B cell (primary cell): ENCODE measurements at regions of chr3 and their contacts with region 1.

Region 1: DNA sequence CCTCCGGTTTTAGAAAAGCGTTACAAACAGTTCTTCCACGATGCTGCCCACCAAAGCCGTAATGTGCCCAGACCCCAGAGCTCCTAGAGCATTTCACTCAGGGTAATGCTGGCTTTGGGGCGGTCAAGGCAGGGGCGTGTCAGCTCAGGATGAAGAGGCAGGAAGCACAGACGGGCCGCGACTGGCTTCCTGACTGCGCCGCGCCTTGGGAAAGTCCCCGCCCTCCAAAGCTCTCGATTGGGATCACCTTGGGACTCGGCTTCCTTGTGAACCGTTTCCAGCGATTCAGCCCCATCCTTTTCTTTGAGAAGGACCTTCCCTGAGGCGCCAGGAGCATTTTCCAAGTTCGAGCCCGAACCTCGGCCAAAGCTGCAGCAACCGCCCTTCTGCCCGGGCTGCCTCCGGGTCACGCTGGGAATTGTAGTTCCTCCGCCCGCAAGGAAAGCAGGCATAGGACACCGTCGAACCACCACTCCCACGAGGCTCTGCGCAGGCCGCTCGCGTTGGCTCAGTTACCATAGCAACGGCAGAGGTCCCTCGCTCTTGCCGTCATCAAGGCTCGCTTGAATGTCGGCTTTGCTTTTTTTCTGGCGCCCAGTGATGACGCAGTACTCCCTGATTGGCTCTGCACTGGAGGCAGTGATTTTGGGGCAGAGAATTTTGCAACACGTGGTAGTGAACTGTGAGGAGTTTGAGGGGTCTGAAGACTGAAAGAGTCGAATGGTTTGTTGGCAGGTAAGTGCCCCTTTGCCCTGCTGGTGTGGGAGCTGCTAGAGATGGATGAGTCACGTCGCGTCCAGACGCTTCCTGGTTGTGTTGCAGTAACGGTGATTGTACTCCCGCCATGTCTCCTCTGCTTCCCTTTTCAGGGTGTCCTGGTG is at the starts of genes CCDC191 and QTRT2:
- DNase-seq: peak; percentile 99
- ATAC-seq: peak; percentile 95
- H3K4me3 ChIP-seq: peak within 1 kb of the TSS; percentile 71 to 100 (median 74)
- H3K4me3 Mint-ChIP-seq: peak within 1 kb of the TSS; percentile 95
- H3K27ac ChIP-seq: peak within 1 kb of the TSS; percentile 82 to 93
- H3K27ac Mint-ChIP-seq: peak within 1 kb of the TSS; percentile 96
- H3K4me1 ChIP-seq: peaks cover 36 to 46% of the 10 kb centered on the region in 2 donors
- H3K4me1 Mint-ChIP-seq: peaks cover 59% of the 10 kb centered on the region
- H3K27me3 ChIP-seq: no peaks in the 10 kb centered on the region
- H3K27me3 Mint-ChIP-seq: no peaks in the 10 kb centered on the region
- CTCF ChIP-seq: no peak
- total RNA-seq, gene CCDC191: 47.9 and 52.5 TPM in 2 replicates
- total RNA-seq, gene QTRT2: 59.5 and 61.8 TPM in 2 replicates

Region 2: GRCh38 chr3:113514265-113514769 is 542.1 kb before region 1 on chr3:
- CTCF ChIA-PET with region 1: no interaction called
- POLR2A ChIA-PET with region 1: no interaction called
- intact Hi-C with region 1: loop called (anchors 2 kb)
- DNase-seq: no peak
- ATAC-seq: no peak
- H3K4me3 ChIP-seq: peak overlapping the region; percentile 46 to 98 (median 92)
- H3K4me3 Mint-ChIP-seq: no peak overlapping the region
- H3K27ac ChIP-seq: peak overlapping the region; percentile 77 to 91
- H3K27ac Mint-ChIP-seq: no peak overlapping the region
- H3K4me1 ChIP-seq: peaks cover 12 to 17% of the 10 kb centered on the region in 2 donors
- H3K4me1 Mint-ChIP-seq: peaks cover 14% of the 10 kb centered on the region
- H3K27me3 ChIP-seq: peaks cover 0 to 14% (median 4%) of the 10 kb centered on the region in 4 experiments
- H3K27me3 Mint-ChIP-seq: peaks cover 23% of the 10 kb centered on the region
- CTCF ChIP-seq: no peak

Region 3: DNA sequence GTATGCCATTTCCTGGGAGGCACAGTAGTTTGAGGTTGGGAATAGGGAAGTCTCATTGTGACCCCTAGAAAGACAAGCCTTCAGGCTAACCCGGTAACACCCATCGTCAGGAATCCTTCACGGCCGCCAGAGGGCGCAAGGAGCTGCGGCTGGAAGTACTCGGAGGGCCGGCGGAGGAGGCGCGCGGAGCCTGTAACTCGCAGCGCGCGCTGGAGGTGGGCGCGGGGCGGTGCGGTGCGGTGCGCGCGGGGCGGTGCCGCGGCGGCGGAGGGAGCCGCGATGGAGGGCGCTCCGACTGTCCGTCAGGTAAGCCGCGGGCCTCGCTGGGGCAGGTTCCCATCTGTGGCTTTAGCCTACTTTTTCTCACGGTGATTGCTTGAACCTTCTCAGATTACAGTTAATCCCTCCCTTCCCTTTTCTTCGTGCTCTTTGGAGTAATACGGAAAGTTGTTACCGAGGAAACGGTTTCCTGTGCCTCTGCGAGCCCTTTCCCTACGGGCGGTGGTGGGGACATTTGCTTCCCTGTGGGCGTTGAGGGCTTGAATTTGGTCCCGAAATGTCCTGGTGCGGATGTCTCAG is 217.7 kb before region 1 on chr3 and contains the start of gene GRAMD1C:
- CTCF ChIA-PET with region 1: no interaction called
- POLR2A ChIA-PET with region 1: no interaction called
- intact Hi-C with region 1: loop called (anchors 1 kb)
- DNase-seq: peak; percentile 92
- ATAC-seq: peak; percentile 99
- H3K4me3 ChIP-seq: peak within 1 kb of the TSS; percentile 59 to 84 (median 70)
- H3K4me3 Mint-ChIP-seq: peak within 1 kb of the TSS; percentile 91
- H3K27ac ChIP-seq: peak within 1 kb of the TSS; percentile 8 to 62
- H3K27ac Mint-ChIP-seq: peak within 1 kb of the TSS; percentile 71
- H3K4me1 ChIP-seq: peaks cover 7 to 13% of the 10 kb centered on the region in 2 donors
- H3K4me1 Mint-ChIP-seq: peaks cover 29% of the 10 kb centered on the region
- H3K27me3 ChIP-seq: no peaks in the 10 kb centered on the region
- H3K27me3 Mint-ChIP-seq: no peaks in the 10 kb centered on the region
- CTCF ChIP-seq: peak; percentile 84
- total RNA-seq, gene GRAMD1C: 47.1 and 52.5 TPM in 2 replicates

Region 4: DNA sequence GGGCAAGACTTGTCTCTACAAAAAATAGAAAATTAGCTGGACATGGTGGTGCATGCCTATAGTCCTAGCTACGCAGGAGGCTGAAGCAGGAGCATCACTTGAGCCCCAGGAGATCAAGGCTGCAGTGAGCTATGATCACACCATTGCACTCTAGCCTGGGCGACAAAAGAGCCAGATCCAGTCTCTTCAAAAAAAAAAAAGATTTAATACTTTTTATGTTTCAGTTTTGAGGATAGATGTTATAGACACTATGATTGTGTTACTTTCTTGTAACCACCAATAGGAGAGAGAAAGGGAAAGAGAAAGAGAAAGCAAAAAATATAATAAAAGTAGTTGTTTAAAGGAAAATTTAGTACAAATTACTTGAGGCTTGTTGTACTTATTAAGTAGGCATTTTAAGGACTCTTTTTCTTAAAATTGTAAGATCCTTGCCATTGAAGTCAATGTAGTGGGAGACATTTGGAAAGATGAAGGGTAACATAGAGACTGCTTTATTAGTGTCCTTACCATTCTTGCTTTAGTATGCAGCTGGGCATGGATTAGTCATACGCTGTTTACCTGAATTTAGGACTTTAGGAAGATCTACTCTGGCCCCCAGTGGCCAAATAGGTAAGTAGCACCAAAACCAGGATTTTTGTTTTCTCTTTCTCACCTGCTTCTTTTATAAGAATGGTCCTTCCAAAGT is 143.7 kb before region 1 on chr3:
- CTCF ChIA-PET with region 1: no interaction called
- POLR2A ChIA-PET with region 1: no interaction called
- intact Hi-C with region 1: loop called (anchors 1 kb)
- DNase-seq: peak; percentile 68
- ATAC-seq: peak; percentile 97
- H3K4me3 ChIP-seq: peak overlapping the region in 1 of 5 experiments; percentile 22
- H3K4me3 Mint-ChIP-seq: peak overlapping the region; percentile 53
- H3K27ac ChIP-seq: no peak overlapping the region
- H3K27ac Mint-ChIP-seq: peak overlapping the region; percentile 13
- H3K4me1 ChIP-seq: peaks cover 0 to 3% of the 10 kb centered on the region in 2 donors
- H3K4me1 Mint-ChIP-seq: peaks cover 4% of the 10 kb centered on the region
- H3K27me3 ChIP-seq: no peaks in the 10 kb centered on the region
- H3K27me3 Mint-ChIP-seq: no peaks in the 10 kb centered on the region
- CTCF ChIP-seq: peak; percentile 75

Region 5: GRCh38 chr3:113985541-113985940 is 70.8 kb before region 1 on chr3:
- CTCF ChIA-PET with region 1: interaction called, 3 read pairs
- POLR2A ChIA-PET with region 1: interaction called, 12 read pairs
- intact Hi-C with region 1: loop called (anchors 1 kb)
- DNase-seq: peak; percentile 84
- ATAC-seq: peak; percentile 94
- H3K4me3 ChIP-seq: peak overlapping the region in 4 of 5 experiments; percentile 4 to 34 (median 5)
- H3K4me3 Mint-ChIP-seq: peak overlapping the region; percentile 79
- H3K27ac ChIP-seq: peak overlapping the region; percentile 97 to 98
- H3K27ac Mint-ChIP-seq: peak overlapping the region; percentile 98
- H3K4me1 ChIP-seq: peaks cover 39 to 43% of the 10 kb centered on the region in 2 donors
- H3K4me1 Mint-ChIP-seq: peaks cover 58% of the 10 kb centered on the region
- H3K27me3 ChIP-seq: no peaks in the 10 kb centered on the region
- H3K27me3 Mint-ChIP-seq: no peaks in the 10 kb centered on the region
- CTCF ChIP-seq: no peak

Region 6: DNA sequence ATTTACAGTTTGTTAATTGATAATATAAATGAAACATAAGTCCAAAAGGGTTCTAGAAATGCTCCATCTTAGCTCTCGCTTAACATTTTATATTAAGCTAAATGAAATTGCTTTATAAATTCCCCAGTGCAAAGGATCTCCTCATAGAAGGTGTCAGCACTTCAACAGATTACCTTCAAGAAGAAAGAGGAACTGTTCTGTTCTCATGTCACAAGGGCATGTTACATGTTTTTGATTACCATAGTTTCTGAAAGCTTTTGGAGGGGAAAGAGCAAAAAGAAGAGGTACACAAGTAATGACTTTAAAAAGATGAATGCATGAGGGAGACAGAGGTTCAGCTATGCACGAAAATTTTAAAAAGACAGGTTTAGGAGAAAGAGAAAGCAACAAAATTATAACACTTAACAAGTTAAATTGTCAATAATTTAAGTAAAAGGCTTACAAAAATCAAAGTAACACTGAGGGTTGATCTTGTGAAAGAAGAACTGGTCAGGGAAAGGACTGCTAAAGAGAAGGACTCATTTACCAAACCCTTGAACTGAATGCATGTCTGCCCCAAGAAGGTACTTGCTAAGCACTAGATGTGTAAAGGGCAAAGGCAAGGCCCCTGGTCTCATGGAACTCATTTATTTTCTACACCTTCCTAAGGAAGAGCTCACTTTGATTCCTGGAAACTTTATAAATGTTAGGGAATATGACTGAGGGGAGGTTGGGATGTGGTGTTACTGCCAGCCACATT is 45.1 kb before region 1 on chr3:
- CTCF ChIA-PET with region 1: interaction called, 8 read pairs
- POLR2A ChIA-PET with region 1: interaction called, 10 read pairs
- intact Hi-C with region 1: loop called (anchors 1 kb)
- DNase-seq: peak; percentile 69
- ATAC-seq: peak; percentile 90
- H3K4me3 ChIP-seq: peak overlapping the region; percentile 36 to 78 (median 57)
- H3K4me3 Mint-ChIP-seq: peak overlapping the region; percentile 48
- H3K27ac ChIP-seq: peak overlapping the region; percentile 88 to 94
- H3K27ac Mint-ChIP-seq: peak overlapping the region; percentile 85
- H3K4me1 ChIP-seq: peaks cover 15 to 32% of the 10 kb centered on the region in 2 donors
- H3K4me1 Mint-ChIP-seq: peaks cover 41% of the 10 kb centered on the region
- H3K27me3 ChIP-seq: no peaks in the 10 kb centered on the region
- H3K27me3 Mint-ChIP-seq: no peaks in the 10 kb centered on the region
- CTCF ChIP-seq: no peak

Region 7: DNA sequence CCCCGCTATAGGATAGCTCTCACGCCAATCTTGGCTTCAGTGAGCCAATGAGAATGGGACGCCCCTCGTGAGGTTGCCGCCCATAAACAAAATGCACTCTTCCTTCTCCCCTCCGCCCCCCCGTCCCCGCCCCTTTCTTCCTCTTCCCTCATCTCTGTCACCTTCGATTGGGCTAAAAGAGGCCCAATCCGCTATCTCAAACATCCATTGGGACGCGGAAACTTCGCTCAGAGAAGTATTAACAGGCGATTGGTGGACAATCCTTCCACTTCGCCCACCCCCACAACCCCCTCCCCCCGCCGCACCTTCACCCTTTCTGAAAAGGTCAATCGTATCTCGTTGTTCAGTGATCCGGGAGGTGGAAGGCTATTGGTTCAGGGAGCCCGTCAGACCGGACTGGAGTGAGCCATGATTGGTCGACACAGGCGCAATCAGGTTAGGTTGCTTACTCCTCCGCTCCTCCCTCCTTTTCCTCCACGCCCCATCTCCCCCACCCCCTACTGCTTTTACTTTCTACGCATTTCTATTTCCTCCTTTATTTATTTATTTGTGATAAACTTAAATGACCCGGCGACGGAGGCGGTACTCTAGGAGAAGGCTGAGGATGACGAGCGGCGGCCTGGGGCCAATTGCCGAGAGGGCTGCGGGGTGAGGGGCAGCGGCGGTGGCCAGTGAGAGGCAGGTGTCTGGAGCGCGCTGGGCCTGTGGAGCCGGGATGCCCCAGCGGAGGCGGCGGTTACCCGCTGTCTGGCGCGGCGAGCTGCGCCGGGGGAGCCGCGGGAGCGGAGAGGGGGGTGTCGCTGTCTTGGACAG is 1091.2 kb after region 1 on chr3:
- CTCF ChIA-PET with region 1: no interaction called
- POLR2A ChIA-PET with region 1: no interaction called
- intact Hi-C with region 1: loop called (anchors 10 kb)
- DNase-seq: peak; percentile 100
- ATAC-seq: peak; percentile 74
- H3K4me3 ChIP-seq: peak overlapping the region; percentile 82 to 96 (median 86)
- H3K4me3 Mint-ChIP-seq: peak overlapping the region; percentile 90
- H3K27ac ChIP-seq: peak overlapping the region; percentile 97 to 99
- H3K27ac Mint-ChIP-seq: peak overlapping the region; percentile 97
- H3K4me1 ChIP-seq: peaks cover 11 to 20% of the 10 kb centered on the region in 2 donors
- H3K4me1 Mint-ChIP-seq: peaks cover 31% of the 10 kb centered on the region
- H3K27me3 ChIP-seq: no peaks in the 10 kb centered on the region
- H3K27me3 Mint-ChIP-seq: no peaks in the 10 kb centered on the region
- CTCF ChIP-seq: no peak